ENCODE measurements at regions of chr3 and their contacts with region 1.

Region 1: GRCh38 chr3:63961891-63962290 is 49.7 kb upstream of the SCAANT1 start:
- DNase-seq: peak in 4 of 5 donors; percentile 65 to 68 (median 66)
- H3K4me3 ChIP-seq: no peak overlapping the region
- H3K4me3 Mint-ChIP-seq: no peak overlapping the region
- H3K27ac ChIP-seq: no peak overlapping the region
- H3K27ac Mint-ChIP-seq: peak overlapping the region in 4 of 7 donors; percentile 32 to 74 (median 57)
- H3K4me1 ChIP-seq: peaks cover 33% of the 10 kb centered on the region
- H3K4me1 Mint-ChIP-seq: peaks cover 37 to 59% (median 47%) of the 10 kb centered on the region in 4 donors
- H3K27me3 ChIP-seq: no peaks in the 10 kb centered on the region
- H3K27me3 Mint-ChIP-seq: no peaks in the 10 kb centered on the region

Region 2: DNA sequence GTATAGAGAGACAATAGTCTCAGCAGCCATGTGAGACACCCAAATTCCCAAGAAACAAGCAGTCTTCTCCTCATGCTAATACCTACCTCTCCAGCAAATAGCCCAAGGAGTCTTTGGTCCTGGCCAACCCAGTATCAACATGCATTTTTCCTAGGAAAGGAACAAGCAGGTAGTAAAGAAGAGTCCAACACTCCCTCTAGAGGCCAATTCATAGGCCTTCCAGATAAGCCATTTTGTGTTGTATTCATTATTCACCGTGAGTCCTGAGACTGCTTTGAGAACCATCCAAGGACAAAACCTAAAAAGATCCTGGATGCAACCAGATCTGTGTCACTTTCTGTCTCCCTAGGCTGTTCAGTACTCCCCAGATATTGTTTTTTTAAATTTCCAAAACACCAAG is 373.0 kb before region 1 on chr3:
- CTCF ChIA-PET with region 1: no interaction called
- POLR2A ChIA-PET with region 1: no interaction called
- intact Hi-C with region 1: no loop called
- DNase-seq: no peak
- H3K4me3 ChIP-seq: no peak overlapping the region
- H3K4me3 Mint-ChIP-seq: no peak overlapping the region
- H3K27ac ChIP-seq: no peak overlapping the region
- H3K27ac Mint-ChIP-seq: no peak overlapping the region
- H3K4me1 ChIP-seq: no peaks in the 10 kb centered on the region
- H3K4me1 Mint-ChIP-seq: no peaks in the 10 kb centered on the region
- H3K27me3 ChIP-seq: no peaks in the 10 kb centered on the region
- H3K27me3 Mint-ChIP-seq: no peaks in the 10 kb centered on the region

Region 3: DNA sequence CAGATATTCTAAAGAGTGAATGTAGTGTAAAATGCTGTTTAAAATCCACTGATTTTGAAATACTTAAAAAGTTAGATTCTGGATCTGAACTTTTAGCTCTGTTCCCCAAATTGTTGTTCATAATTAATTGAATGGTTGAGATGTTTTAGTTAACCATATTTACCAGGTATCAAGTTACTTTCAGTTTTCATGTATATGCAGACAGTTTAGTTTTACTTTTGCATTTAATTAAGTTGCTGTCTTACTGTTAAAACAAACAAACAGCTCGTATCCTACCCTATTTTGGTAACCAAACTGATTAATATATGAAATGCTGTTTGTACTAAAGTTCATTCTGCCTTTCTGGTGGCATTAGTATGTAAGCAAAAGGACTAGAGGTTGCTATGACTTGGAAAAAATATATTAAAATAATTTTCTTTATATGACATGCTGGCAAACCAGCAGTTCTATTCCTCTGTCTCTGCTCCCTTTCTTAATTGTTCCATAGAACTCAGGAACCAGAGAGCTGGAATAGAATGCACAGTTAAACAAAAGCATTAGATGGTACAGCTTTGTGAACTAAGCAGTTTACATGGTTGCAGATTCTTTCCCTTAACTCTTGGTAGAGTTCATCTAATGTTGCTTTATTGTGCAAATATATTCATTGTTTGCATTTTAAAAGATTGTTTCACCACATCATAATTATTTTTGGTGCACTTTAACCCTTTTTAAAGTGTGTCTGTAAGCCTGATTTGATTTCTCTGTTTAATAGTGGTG is 10.2 kb before region 1 on chr3:
- CTCF ChIA-PET with region 1: interaction called, 19 read pairs
- POLR2A ChIA-PET with region 1: interaction called, 3 read pairs
- intact Hi-C with region 1: no loop called
- DNase-seq: no peak
- H3K4me3 ChIP-seq: peak overlapping the region in 1 of 2 donors; percentile 17
- H3K4me3 Mint-ChIP-seq: peak overlapping the region; percentile 38 to 78 (median 62)
- H3K27ac ChIP-seq: peak overlapping the region; percentile 22
- H3K27ac Mint-ChIP-seq: peak overlapping the region; percentile 43 to 87 (median 72)
- H3K4me1 ChIP-seq: peaks cover 51% of the 10 kb centered on the region
- H3K4me1 Mint-ChIP-seq: peaks cover 37 to 63% (median 56%) of the 10 kb centered on the region in 4 donors
- H3K27me3 ChIP-seq: no peaks in the 10 kb centered on the region
- H3K27me3 Mint-ChIP-seq: no peaks in the 10 kb centered on the region

Region 4: GRCh38 chr3:63975723-63976122 is 13.8 kb after region 1 on chr3:
- CTCF ChIA-PET with region 1: interaction called, 875 read pairs
- POLR2A ChIA-PET with region 1: interaction called, 347 read pairs
- intact Hi-C with region 1: loop called (anchors 1 kb)
- DNase-seq: no peak
- H3K4me3 ChIP-seq: no peak overlapping the region
- H3K4me3 Mint-ChIP-seq: peak overlapping the region in 7 of 8 donors; percentile 19 to 84 (median 53)
- H3K27ac ChIP-seq: no peak overlapping the region
- H3K27ac Mint-ChIP-seq: peak overlapping the region; percentile 68 to 91 (median 87)
- H3K4me1 ChIP-seq: peaks cover 97% of the 10 kb centered on the region
- H3K4me1 Mint-ChIP-seq: peaks cover 79 to 98% (median 90%) of the 10 kb centered on the region in 4 donors
- H3K27me3 ChIP-seq: no peaks in the 10 kb centered on the region
- H3K27me3 Mint-ChIP-seq: no peaks in the 10 kb centered on the region

Region 5: GRCh38 chr3:64003589-64003988 is 41.7 kb after region 1 on chr3:
- CTCF ChIA-PET with region 1: interaction called, 875 read pairs
- POLR2A ChIA-PET with region 1: interaction called, 4 read pairs
- intact Hi-C with region 1: no loop called
- DNase-seq: no peak
- H3K4me3 ChIP-seq: no peak overlapping the region
- H3K4me3 Mint-ChIP-seq: no peak overlapping the region
- H3K27ac ChIP-seq: no peak overlapping the region
- H3K27ac Mint-ChIP-seq: peak overlapping the region in 4 of 7 donors; percentile 10 to 43 (median 34)
- H3K4me1 ChIP-seq: peaks cover 3% of the 10 kb centered on the region
- H3K4me1 Mint-ChIP-seq: peaks cover 10 to 25% (median 15%) of the 10 kb centered on the region in 4 donors
- H3K27me3 ChIP-seq: no peaks in the 10 kb centered on the region
- H3K27me3 Mint-ChIP-seq: no peaks in the 10 kb centered on the region

Region 6: DNA sequence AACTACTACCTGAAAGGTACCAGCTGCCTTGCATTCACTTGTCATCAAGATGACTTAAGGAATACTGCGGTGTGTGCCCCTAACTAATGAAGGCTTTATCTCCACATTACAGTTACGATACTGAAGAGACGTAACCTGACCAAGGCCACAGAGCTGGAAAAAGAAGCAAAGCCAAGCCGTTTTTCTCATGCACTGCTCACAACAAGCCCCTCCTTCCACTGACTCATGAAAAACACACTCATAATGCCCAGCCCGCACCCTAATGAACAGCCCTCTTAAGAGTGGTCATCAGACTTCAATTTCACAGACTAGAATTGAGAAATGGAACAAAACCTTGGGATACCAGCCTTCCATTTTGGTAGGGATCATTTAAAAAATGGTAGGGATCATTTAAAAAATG is 49.8 kb after region 1 on chr3:
- CTCF ChIA-PET with region 1: interaction called, 16 read pairs
- POLR2A ChIA-PET with region 1: interaction called, 4 read pairs
- intact Hi-C with region 1: no loop called
- DNase-seq: no peak
- H3K4me3 ChIP-seq: no peak overlapping the region
- H3K4me3 Mint-ChIP-seq: no peak overlapping the region
- H3K27ac ChIP-seq: no peak overlapping the region
- H3K27ac Mint-ChIP-seq: peak overlapping the region in 4 of 7 donors; percentile 7 to 81 (median 54)
- H3K4me1 ChIP-seq: no peaks in the 10 kb centered on the region
- H3K4me1 Mint-ChIP-seq: peaks cover 18 to 27% (median 26%) of the 10 kb centered on the region in 4 donors
- H3K27me3 ChIP-seq: no peaks in the 10 kb centered on the region
- H3K27me3 Mint-ChIP-seq: no peaks in the 10 kb centered on the region

Region 7: GRCh38 chr3:64259636-64260035 is 297.7 kb after region 1 on chr3:
- CTCF ChIA-PET with region 1: no interaction called
- POLR2A ChIA-PET with region 1: no interaction called
- intact Hi-C with region 1: no loop called
- DNase-seq: no peak
- H3K4me3 ChIP-seq: no peak overlapping the region
- H3K4me3 Mint-ChIP-seq: no peak overlapping the region
- H3K27ac ChIP-seq: no peak overlapping the region
- H3K27ac Mint-ChIP-seq: no peak overlapping the region
- H3K4me1 ChIP-seq: no peaks in the 10 kb centered on the region
- H3K4me1 Mint-ChIP-seq: no peaks in the 10 kb centered on the region
- H3K27me3 ChIP-seq: no peaks in the 10 kb centered on the region
- H3K27me3 Mint-ChIP-seq: peaks cover 2 to 6% of the 10 kb centered on the region in 2 donors

Region 8: GRCh38 chr3:64685800-64686445 is 724.0 kb after region 1 on chr3:
- CTCF ChIA-PET with region 1: no interaction called
- POLR2A ChIA-PET with region 1: no interaction called
- intact Hi-C with region 1: no loop called
- DNase-seq: peak in 1 of 5 donors; percentile 3
- H3K4me3 ChIP-seq: no peak overlapping the region
- H3K4me3 Mint-ChIP-seq: no peak overlapping the region
- H3K27ac ChIP-seq: no peak overlapping the region
- H3K27ac Mint-ChIP-seq: no peak overlapping the region
- H3K4me1 ChIP-seq: no peaks in the 10 kb centered on the region
- H3K4me1 Mint-ChIP-seq: peaks cover 4 to 16% (median 9%) of the 10 kb centered on the region in 4 donors
- H3K27me3 ChIP-seq: peaks cover 4% of the 10 kb centered on the region
- H3K27me3 Mint-ChIP-seq: peaks cover 24 to 28% of the 10 kb centered on the region in 2 donors

Region 9: DNA sequence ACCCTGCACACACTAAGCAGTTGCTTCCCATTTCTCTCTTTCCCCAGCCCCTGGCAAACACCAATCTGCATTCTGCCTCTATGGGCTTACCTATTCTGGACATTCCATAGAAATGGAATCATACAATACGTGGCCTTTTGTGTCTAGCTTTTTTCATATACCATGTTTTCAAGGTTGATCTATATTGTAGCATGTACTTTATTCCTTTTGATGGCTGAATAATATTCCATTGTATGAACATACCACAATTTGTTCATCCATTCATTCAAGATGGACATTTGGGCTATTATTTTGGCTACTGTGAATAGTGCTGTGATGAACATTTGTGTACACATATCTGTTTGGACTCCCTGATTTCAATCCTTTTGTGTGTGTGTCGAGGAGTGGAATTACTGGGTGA is 744.1 kb after region 1 on chr3:
- CTCF ChIA-PET with region 1: no interaction called
- POLR2A ChIA-PET with region 1: no interaction called
- intact Hi-C with region 1: no loop called
- DNase-seq: no peak
- H3K4me3 ChIP-seq: no peak overlapping the region
- H3K4me3 Mint-ChIP-seq: no peak overlapping the region
- H3K27ac ChIP-seq: no peak overlapping the region
- H3K27ac Mint-ChIP-seq: no peak overlapping the region
- H3K4me1 ChIP-seq: no peaks in the 10 kb centered on the region
- H3K4me1 Mint-ChIP-seq: no peaks in the 10 kb centered on the region
- H3K27me3 ChIP-seq: no peaks in the 10 kb centered on the region
- H3K27me3 Mint-ChIP-seq: no peaks in the 10 kb centered on the region

Measured in CD4-positive, alpha-beta memory T cell (primary cell).